PC-3 (cell line): ENCODE measurements at regions of chr2 and their contacts with region 1.

Region 1: DNA sequence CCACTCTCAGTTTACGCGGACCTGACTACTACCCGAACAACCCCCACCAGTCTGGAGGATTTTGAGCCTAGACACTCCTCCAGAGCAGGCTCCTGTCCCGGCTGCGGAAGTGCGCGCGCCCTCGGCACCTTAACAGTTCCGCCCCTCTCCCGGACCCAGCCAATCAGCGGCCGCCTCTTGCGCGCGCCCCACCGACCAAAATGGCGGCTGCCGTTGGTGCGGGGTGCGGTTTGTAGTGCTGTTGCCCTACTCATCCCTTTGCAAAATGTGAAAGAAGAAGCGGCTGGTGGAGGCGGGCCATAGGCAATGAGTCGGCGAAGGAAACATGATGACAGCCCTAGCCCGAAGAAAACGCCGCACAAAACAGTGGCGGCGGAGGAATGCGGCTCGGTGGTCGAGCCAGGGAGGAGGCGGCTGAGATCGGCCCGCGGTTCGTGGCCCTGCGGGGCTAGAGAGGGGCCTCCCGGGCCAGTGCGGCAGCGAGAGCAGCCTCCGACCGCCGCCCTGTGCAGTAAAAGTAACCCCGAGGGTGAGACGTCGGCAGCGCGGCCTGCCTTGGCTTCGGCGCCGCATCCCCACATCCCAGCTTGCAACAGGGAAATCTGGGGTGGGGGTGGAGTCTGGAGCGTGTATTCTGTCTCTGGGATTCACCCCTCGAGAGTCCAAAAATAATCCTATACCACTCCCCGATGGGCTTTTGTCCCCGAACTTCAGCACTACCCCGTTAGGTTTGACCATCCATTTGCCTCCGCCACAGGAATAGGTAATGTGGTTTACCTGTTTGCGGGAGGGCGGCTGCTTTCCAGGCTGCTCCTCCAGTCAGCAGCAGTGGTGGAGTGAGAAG is at the start of gene ETAA1:
- DNase-seq: peak; percentile 89
- ATAC-seq: peak; percentile 87
- H3K4me3 ChIP-seq: peak within 1 kb of the TSS; percentile 89
- H3K27ac ChIP-seq: peak within 1 kb of the TSS; percentile 93
- H3K4me1 ChIP-seq: peaks cover 56% of the 10 kb centered on the region
- H3K27me3 ChIP-seq: no peaks in the 10 kb centered on the region
- CTCF ChIP-seq: no peak
- total RNA-seq, gene ETAA1: 12.1 and 14.0 TPM in 2 replicates

Region 2: DNA sequence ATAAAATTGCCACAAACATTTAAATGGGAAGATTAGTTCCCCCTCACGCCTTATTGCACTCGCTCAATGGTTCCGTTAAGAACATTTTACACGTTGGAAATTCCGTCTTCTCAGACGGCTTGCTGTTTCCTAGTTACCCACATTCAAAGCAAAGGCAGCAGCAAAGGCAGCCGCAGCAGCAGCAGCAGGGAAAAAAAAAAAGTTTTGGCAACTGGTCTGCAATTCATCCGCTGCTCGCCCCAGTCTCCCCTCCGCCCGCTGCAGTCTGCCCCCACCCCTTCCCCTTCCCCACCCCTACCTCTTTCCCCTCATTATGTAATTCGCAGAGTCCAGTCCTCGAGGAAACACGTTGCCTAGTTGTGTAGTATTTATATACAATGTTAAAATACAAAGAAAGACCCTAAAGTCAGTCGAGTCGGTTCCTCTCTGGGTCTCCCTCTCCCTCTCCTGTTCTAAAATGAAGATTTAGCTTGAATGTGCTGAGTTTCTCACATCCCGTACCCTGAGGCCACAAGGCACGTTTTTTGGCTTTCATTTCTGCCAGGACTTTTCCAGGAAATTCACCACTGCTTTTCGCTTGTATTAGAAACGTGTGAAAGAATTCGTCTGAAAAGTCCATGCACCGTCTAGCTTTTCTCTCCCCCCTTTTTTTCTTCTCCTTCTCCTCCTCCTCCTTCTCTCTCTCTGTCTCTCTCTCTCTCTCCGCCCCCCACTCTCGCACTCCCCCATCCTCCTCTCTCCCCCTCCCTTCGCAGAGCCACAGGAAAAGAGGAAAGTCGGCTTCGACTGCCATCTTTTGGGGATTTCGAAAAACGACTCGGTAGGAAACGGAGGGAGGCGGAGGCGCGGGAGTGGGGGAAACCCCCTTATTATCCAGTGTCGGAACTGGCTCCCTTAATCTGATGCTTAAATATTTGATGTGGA is 822.4 kb before region 1 on chr2:
- CTCF ChIA-PET with region 1: no interaction called
- POLR2A ChIA-PET with region 1: no interaction called
- intact Hi-C with region 1: loop called (anchors 5 kb)
- DNase-seq: peak; percentile 77
- ATAC-seq: peak; percentile 65
- H3K4me3 ChIP-seq: peak overlapping the region; percentile 76
- H3K27ac ChIP-seq: no peak overlapping the region
- H3K4me1 ChIP-seq: peaks cover 17% of the 10 kb centered on the region
- H3K27me3 ChIP-seq: peaks cover 37% of the 10 kb centered on the region
- CTCF ChIP-seq: peak; percentile 84

Region 3: GRCh38 chr2:67295851-67296250 is 101.5 kb before region 1 on chr2:
- CTCF ChIA-PET with region 1: no interaction called
- POLR2A ChIA-PET with region 1: no interaction called
- intact Hi-C with region 1: loop called (anchors 5 kb)
- DNase-seq: peak; percentile 50
- ATAC-seq: peak; percentile 66
- H3K4me3 ChIP-seq: peak overlapping the region; percentile 33; the same call in 1 of the 2 replicates
- H3K27ac ChIP-seq: peak overlapping the region; percentile 76
- H3K4me1 ChIP-seq: peaks cover 29% of the 10 kb centered on the region
- H3K27me3 ChIP-seq: no peaks in the 10 kb centered on the region
- CTCF ChIP-seq: no peak

Region 4: DNA sequence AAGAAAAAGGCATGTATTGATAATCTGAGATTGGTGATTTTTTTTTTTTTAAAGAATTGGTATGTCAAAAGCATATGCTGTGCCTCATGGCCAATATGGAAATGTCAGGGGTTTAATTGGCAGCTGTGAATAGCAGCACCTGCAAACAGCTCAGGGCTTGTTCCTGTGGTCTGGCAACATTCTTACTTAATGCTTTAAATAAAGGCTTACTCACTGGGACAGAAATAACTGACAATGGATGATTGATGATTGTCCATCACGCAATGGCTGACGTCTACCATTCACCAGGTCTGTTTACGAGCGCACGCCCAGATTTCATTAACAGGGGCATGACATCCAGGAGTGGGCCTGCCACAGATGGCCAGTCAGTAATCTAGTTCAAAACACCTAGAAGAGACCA is 66.4 kb after region 1 on chr2:
- CTCF ChIA-PET with region 1: no interaction called
- POLR2A ChIA-PET with region 1: no interaction called
- intact Hi-C with region 1: loop called (anchors 5 kb)
- DNase-seq: peak; percentile 96
- ATAC-seq: peak; percentile 88
- H3K4me3 ChIP-seq: no peak overlapping the region
- H3K27ac ChIP-seq: peak overlapping the region; percentile 94
- H3K4me1 ChIP-seq: peaks cover 34% of the 10 kb centered on the region
- H3K27me3 ChIP-seq: no peaks in the 10 kb centered on the region
- CTCF ChIP-seq: no peak

Region 5: GRCh38 chr2:67561457-67561965 is 164.1 kb after region 1 on chr2:
- CTCF ChIA-PET with region 1: no interaction called
- POLR2A ChIA-PET with region 1: no interaction called
- intact Hi-C with region 1: no loop called
- DNase-seq: peak; percentile 95
- ATAC-seq: peak; percentile 79
- H3K4me3 ChIP-seq: no peak overlapping the region
- H3K27ac ChIP-seq: peak overlapping the region; percentile 63
- H3K4me1 ChIP-seq: peaks cover 51% of the 10 kb centered on the region
- H3K27me3 ChIP-seq: no peaks in the 10 kb centered on the region
- CTCF ChIP-seq: no peak

Region 6: GRCh38 chr2:67650291-67651133 is 253.1 kb after region 1 on chr2:
- CTCF ChIA-PET with region 1: no interaction called
- POLR2A ChIA-PET with region 1: no interaction called
- intact Hi-C with region 1: loop called (anchors 2 kb)
- DNase-seq: peak; percentile 85
- ATAC-seq: peak; percentile 100
- H3K4me3 ChIP-seq: no peak overlapping the region
- H3K27ac ChIP-seq: 0 out of 2 replicates have a peak overlapping the region, but pooled peaks have one; percentile 19
- H3K4me1 ChIP-seq: peaks cover 6% of the 10 kb centered on the region
- H3K27me3 ChIP-seq: no peaks in the 10 kb centered on the region
- CTCF ChIP-seq: peak; percentile 90

Region 7: DNA sequence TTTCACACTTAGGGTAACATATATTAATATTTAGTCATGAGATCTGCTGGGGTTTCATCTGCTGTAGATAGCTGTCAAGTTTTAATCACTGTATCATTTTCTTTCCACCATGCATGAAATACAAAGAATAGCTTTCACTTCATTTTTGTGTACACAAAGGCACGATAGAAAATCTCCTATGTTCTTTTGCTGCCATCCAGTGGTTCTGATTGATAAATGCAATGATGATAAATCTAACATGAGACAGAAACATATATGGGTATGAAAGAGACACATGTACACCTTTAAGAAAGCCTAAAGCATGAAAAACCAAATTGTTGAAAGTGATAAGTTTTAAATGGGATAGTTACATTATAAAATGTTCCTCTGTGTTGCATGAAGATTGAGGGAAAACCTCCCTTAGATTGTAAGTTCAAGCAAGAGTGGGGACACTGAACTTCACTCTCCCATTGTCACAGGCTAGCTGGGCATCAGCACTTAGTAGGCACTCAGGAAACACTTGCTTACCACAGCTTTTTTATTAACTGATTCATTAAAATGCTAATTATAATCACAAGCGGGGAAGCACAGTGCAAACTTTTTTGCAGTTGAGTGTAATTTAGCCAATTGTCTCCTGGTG is 634.3 kb after region 1 on chr2:
- CTCF ChIA-PET with region 1: no interaction called
- POLR2A ChIA-PET with region 1: no interaction called
- intact Hi-C with region 1: loop called (anchors 10 kb)
- DNase-seq: peak; percentile 85
- ATAC-seq: peak; percentile 73
- H3K4me3 ChIP-seq: no peak overlapping the region
- H3K27ac ChIP-seq: no peak overlapping the region
- H3K4me1 ChIP-seq: peaks cover 14% of the 10 kb centered on the region
- H3K27me3 ChIP-seq: no peaks in the 10 kb centered on the region
- CTCF ChIP-seq: peak; percentile 88